Activated T-helper 1 cell treated with anti-CD3 and anti-CD28 coated beads, Interleukin-12 subunit alpha, Interleukin-12 subunit beta, Interleukin-2, Interleukin-4 antibody, amounts not matched to agents 30 ng/mL and 10 ng/mL and 1 ng/mL, durations not matched to agents 14 hours and 24 hours and 36 hours (primary cell): ENCODE measurements at regions of chr2 and their contacts with region 1.

Region 1: GRCh38 chr2:105645031-105645937 is 99.4 kb upstream of the NCK2 start:
- DNase-seq: no peak
- H3K4me3 Mint-ChIP-seq: no peak overlapping the region
- H3K27ac Mint-ChIP-seq: no peak overlapping the region
- H3K4me1 Mint-ChIP-seq: no peaks in the 10 kb centered on the region
- H3K27me3 Mint-ChIP-seq: peaks cover 10% of the 10 kb centered on the region

Region 2: DNA sequence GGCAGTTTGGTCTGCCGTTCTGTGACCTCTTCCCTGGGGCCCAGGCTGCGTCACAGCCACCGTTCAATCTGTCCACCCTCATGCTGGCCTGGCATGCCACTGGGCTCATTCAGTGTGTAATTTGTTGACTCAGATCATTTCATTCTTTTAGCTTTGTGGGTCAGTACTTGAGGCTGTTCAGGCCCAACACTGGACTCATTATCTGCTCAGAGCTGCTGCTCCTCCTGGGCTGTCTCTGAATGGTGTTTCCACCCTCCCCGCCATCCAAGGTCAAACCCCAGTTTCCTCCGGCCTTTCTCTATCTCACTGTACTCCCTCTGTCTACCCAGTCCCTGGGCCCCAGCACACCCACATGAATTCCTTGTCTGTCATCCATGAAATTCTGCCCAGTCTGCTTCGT is 53.0 kb before region 1 on chr2:
- intact Hi-C with region 1: no loop called
- DNase-seq: no peak
- H3K4me3 Mint-ChIP-seq: no peak overlapping the region
- H3K27ac Mint-ChIP-seq: no peak overlapping the region
- H3K4me1 Mint-ChIP-seq: no peaks in the 10 kb centered on the region
- H3K27me3 Mint-ChIP-seq: peaks cover 2% of the 10 kb centered on the region

Region 3: GRCh38 chr2:105674401-105674800 is 29.1 kb after region 1 on chr2:
- intact Hi-C with region 1: loop called (anchors 1 kb)
- DNase-seq: no peak
- H3K4me3 Mint-ChIP-seq: no peak overlapping the region
- H3K27ac Mint-ChIP-seq: no peak overlapping the region
- H3K4me1 Mint-ChIP-seq: peaks cover 19% of the 10 kb centered on the region
- H3K27me3 Mint-ChIP-seq: no peaks in the 10 kb centered on the region